H1 (cell line): ENCODE measurements at regions of chr3 and their contacts with region 1.

Region 1: GRCh38 chr3:12830785-12831156 is 10.6 kb downstream of the RPL32 start:
- DNase-seq: no peak
- H3K4me3 ChIP-seq: no peak overlapping the region
- H3K27ac ChIP-seq: no peak overlapping the region
- H3K4me1 ChIP-seq: peaks cover 0 to 10% (median 5%) of the 10 kb centered on the region in 4 experiments; a peak in 4 of 7 replicates
- H3K27me3 ChIP-seq: no peaks in the 10 kb centered on the region
- CTCF ChIP-seq: peak in 1 of 3 experiments; percentile 29; a peak in 1 of 4 replicates
- EP300 ChIP-seq: no peak
- POLR2A ChIP-seq: no peak
- RAD21 ChIP-seq: no peak

Region 2: DNA sequence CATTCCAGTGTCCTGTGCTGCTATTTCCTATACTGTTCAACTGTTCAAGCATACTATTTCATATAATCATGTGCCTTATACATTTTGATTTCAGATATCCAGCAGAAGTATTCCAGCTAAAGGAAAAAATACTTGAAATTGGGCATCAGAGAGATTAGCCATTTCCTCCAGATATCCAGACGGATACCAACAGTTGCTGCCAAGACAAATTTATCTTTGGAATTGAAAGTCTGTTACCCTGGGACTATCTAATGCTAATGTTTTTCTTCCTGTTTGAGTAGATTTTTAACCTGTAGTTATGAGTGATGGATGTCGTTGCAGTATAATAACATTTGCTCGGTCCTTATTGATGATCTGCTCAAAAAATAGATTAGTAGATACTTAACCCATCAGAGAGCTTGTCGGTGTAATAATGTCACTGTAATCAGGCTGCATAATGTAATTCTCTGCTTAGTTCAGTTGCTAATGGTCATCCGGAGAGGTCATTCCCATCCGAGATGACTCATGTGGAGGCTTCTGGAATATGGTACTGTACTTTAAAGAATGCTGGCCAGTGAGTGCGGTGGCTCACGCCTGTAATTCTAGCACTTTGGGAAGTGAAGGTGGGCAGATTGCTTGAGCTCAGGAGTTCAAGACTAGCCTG is 723.6 kb before region 1 on chr3:
- CTCF ChIA-PET with region 1: no interaction called
- POLR2A ChIA-PET with region 1: no interaction called
- DNase-seq: no peak
- H3K4me3 ChIP-seq: no peak overlapping the region
- H3K27ac ChIP-seq: no peak overlapping the region
- H3K4me1 ChIP-seq: no peaks in the 10 kb centered on the region
- H3K27me3 ChIP-seq: no peaks in the 10 kb centered on the region
- CTCF ChIP-seq: no peak
- EP300 ChIP-seq: no peak
- POLR2A ChIP-seq: no peak
- RAD21 ChIP-seq: no peak

Region 3: GRCh38 chr3:12791430-12791829 is 39.3 kb before region 1 on chr3:
- CTCF ChIA-PET with region 1: interaction called, 37 read pairs
- POLR2A ChIA-PET with region 1: interaction called, 30 read pairs
- DNase-seq: no peak
- H3K4me3 ChIP-seq: no peak overlapping the region
- H3K27ac ChIP-seq: no peak overlapping the region
- H3K4me1 ChIP-seq: peaks cover 0 to 5% (median under 1%) of the 10 kb centered on the region in 4 experiments; a peak in 3 of 7 replicates
- H3K27me3 ChIP-seq: no peaks in the 10 kb centered on the region
- CTCF ChIP-seq: no peak
- EP300 ChIP-seq: no peak
- POLR2A ChIP-seq: no peak
- RAD21 ChIP-seq: no peak

Region 4: GRCh38 chr3:12796171-12797123 is 34.3 kb before region 1 on chr3 and contains the start of gene CAND2:
- CTCF ChIA-PET with region 1: interaction called, 6 read pairs
- POLR2A ChIA-PET with region 1: interaction called, 30 read pairs
- DNase-seq: peak in 1 of 2 experiments; percentile 71
- H3K4me3 ChIP-seq: peak within 1 kb of the TSS; percentile 69 to 88 (median 85)
- H3K27ac ChIP-seq: no peak within 1 kb of the TSS
- H3K4me1 ChIP-seq: peaks cover 0 to 10% (median 2%) of the 10 kb centered on the region in 4 experiments; a peak in 4 of 7 replicates
- H3K27me3 ChIP-seq: no peaks in the 10 kb centered on the region
- CTCF ChIP-seq: no peak
- EP300 ChIP-seq: no peak
- POLR2A ChIP-seq: peak in 1 of 2 experiments; percentile 38; a peak in 1 of 3 replicates
- RAD21 ChIP-seq: no peak; a peak in 1 of 4 replicates
- total RNA-seq, gene CAND2: 8.7 and 11.2 TPM in 2 replicates

Region 5: GRCh38 chr3:12810013-12810780 is 20.6 kb before region 1 on chr3:
- CTCF ChIA-PET with region 1: interaction called, 83 read pairs
- POLR2A ChIA-PET with region 1: interaction called, 661 read pairs
- DNase-seq: peak; percentile 90 to 99
- H3K4me3 ChIP-seq: peak overlapping the region; percentile 38 to 64 (median 60)
- H3K27ac ChIP-seq: no peak overlapping the region
- H3K4me1 ChIP-seq: peaks cover 0 to 8% (median 4%) of the 10 kb centered on the region in 4 experiments; a peak in 4 of 7 replicates
- H3K27me3 ChIP-seq: no peaks in the 10 kb centered on the region
- CTCF ChIP-seq: peak in 2 of 3 experiments; percentile 60 to 70; a peak in 3 of 4 replicates
- EP300 ChIP-seq: no peak
- POLR2A ChIP-seq: peak in 1 of 2 experiments; percentile 55; a peak in 1 of 3 replicates
- RAD21 ChIP-seq: peak; percentile 38 to 47; a peak in 3 of 4 replicates

Region 6: DNA sequence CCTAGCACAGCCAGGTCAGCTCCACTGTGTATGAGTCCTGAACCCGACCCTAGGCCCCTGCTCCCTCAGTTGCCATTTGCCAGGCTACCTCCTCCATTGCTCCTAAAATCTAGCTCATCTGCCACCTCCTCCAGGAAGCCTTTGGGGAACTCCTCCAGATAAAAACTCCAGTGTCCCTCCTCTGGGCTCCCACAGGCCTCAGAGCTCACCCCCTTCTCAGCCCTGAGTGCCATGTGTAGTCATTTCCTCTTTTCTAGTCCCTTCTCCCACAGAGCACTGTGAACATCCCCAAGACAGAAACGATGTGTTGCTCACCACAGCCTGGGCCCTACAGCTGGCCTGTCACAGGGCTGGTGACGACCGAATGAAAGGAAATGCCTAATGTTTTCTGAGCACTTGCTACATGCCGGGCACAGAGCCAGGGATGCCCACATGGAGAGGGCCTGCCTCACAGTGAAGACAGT is 181.5 kb after region 1 on chr3:
- CTCF ChIA-PET with region 1: no interaction called
- POLR2A ChIA-PET with region 1: no interaction called
- DNase-seq: no peak
- H3K4me3 ChIP-seq: no peak overlapping the region
- H3K27ac ChIP-seq: no peak overlapping the region
- H3K4me1 ChIP-seq: peaks cover 7 to 16% (median 9%) of the 10 kb centered on the region in 4 experiments
- H3K27me3 ChIP-seq: no peaks in the 10 kb centered on the region; a peak in 2 of 7 replicates
- CTCF ChIP-seq: no peak
- EP300 ChIP-seq: no peak
- POLR2A ChIP-seq: no peak
- RAD21 ChIP-seq: no peak